ENCODE measurements at regions of chr7 and their contacts with region 1.

Region 1: GRCh38 chr7:39746103-39746819 is 122.9 kb downstream of the RALA start:
- DNase-seq: peak; percentile 79
- H3K4me3 Mint-ChIP-seq: no peak overlapping the region
- H3K27ac Mint-ChIP-seq: peak overlapping the region; percentile 23
- H3K4me1 Mint-ChIP-seq: peaks cover 12% of the 10 kb centered on the region
- H3K27me3 Mint-ChIP-seq: no peaks in the 10 kb centered on the region
- CTCF ChIP-seq: peak; percentile 49

Region 2: GRCh38 chr7:39589323-39590111 is 156.7 kb before region 1 on chr7:
- CTCF ChIA-PET with region 1: interaction called, 14 read pairs
- POLR2A ChIA-PET with region 1: interaction called, 3 read pairs
- intact Hi-C with region 1: no loop called
- DNase-seq: peak; percentile 86
- H3K4me3 Mint-ChIP-seq: no peak overlapping the region
- H3K27ac Mint-ChIP-seq: no peak overlapping the region
- H3K4me1 Mint-ChIP-seq: peaks cover 14% of the 10 kb centered on the region
- H3K27me3 Mint-ChIP-seq: no peaks in the 10 kb centered on the region
- CTCF ChIP-seq: no peak

Region 3: GRCh38 chr7:39732837-39733804 is 13.1 kb before region 1 on chr7:
- CTCF ChIA-PET with region 1: interaction called, 43 read pairs
- POLR2A ChIA-PET with region 1: interaction called, 9 read pairs
- intact Hi-C with region 1: no loop called
- DNase-seq: peak; percentile 93
- H3K4me3 Mint-ChIP-seq: peak overlapping the region; percentile 88
- H3K27ac Mint-ChIP-seq: peak overlapping the region; percentile 96
- H3K4me1 Mint-ChIP-seq: peaks cover 18% of the 10 kb centered on the region
- H3K27me3 Mint-ChIP-seq: no peaks in the 10 kb centered on the region
- CTCF ChIP-seq: no peak

Region 4: DNA sequence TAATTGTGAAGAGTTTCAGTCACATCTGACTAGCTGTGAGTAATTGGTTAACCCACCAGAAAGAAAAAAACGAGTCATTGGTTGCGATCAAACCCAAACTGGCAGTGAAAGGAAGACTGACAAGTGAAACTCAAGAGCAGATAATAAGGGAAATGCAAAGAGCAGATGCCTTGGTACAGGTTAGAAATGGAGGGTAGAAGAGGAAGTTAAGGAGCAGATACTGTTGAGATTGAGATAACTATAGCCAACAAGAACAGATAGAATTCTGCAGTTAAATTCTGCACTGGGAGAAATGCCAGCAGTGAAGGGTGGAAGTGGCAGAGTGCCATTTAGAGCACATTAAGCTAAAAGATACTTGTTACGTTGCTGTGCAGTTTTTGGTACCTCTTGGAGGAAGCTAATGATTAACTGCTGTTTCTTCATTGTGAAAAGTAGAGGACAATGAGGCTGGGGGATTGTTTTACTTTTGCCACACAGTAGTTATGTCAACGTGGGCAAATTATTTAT is 269.6 kb after region 1 on chr7:
- CTCF ChIA-PET with region 1: no interaction called
- POLR2A ChIA-PET with region 1: no interaction called
- intact Hi-C with region 1: no loop called
- DNase-seq: peak; percentile 12
- H3K4me3 Mint-ChIP-seq: no peak overlapping the region
- H3K27ac Mint-ChIP-seq: no peak overlapping the region
- H3K4me1 Mint-ChIP-seq: peaks cover 26% of the 10 kb centered on the region
- H3K27me3 Mint-ChIP-seq: no peaks in the 10 kb centered on the region
- CTCF ChIP-seq: no peak